Activated naive CD4-positive, alpha-beta T cell treated with anti-CD3 and anti-CD28 coated beads for 36 hours (primary cell): ENCODE measurements at regions of chr1 and their contacts with region 1.

Region 1: GRCh38 chr1:192550922-192551534 is 24.5 kb upstream of the RGS1 start:
- DNase-seq: peak; percentile 34
- H3K4me3 Mint-ChIP-seq: no peak overlapping the region
- H3K27ac Mint-ChIP-seq: peak overlapping the region; percentile 53
- H3K4me1 Mint-ChIP-seq: peaks cover 29% of the 10 kb centered on the region
- H3K27me3 Mint-ChIP-seq: no peaks in the 10 kb centered on the region

Region 2: GRCh38 chr1:192263436-192263835 is 287.6 kb before region 1 on chr1:
- CTCF ChIA-PET with region 1: no interaction called
- intact Hi-C with region 1: no loop called
- DNase-seq: no peak
- H3K4me3 Mint-ChIP-seq: no peak overlapping the region
- H3K27ac Mint-ChIP-seq: no peak overlapping the region
- H3K4me1 Mint-ChIP-seq: no peaks in the 10 kb centered on the region
- H3K27me3 Mint-ChIP-seq: no peaks in the 10 kb centered on the region

Region 3: DNA sequence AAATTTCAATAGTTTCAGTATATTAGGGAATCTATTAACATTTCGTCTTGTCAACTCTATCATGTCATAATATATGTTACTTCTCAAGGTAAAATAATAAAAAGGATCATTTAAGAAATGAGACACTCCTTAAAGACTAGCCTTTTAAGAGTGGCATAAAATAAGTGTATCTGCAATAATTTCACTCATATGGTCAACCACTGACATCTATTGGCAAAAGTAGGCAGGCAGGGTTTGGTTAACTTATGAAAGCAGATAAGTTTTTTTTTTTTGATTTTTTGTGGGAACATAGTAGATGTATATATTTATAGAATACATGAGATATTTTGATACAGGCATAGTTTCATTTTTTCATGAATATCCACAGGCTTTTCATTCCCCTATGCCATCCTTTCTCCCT is 239.7 kb before region 1 on chr1:
- CTCF ChIA-PET with region 1: no interaction called
- intact Hi-C with region 1: no loop called
- DNase-seq: no peak
- H3K4me3 Mint-ChIP-seq: no peak overlapping the region
- H3K27ac Mint-ChIP-seq: no peak overlapping the region
- H3K4me1 Mint-ChIP-seq: no peaks in the 10 kb centered on the region
- H3K27me3 Mint-ChIP-seq: no peaks in the 10 kb centered on the region

Region 4: GRCh38 chr1:192566657-192567056 is 15.6 kb after region 1 on chr1:
- CTCF ChIA-PET with region 1: interaction called, 3 read pairs
- intact Hi-C with region 1: loop called (anchors 1 kb)
- DNase-seq: no peak
- H3K4me3 Mint-ChIP-seq: no peak overlapping the region
- H3K27ac Mint-ChIP-seq: no peak overlapping the region
- H3K4me1 Mint-ChIP-seq: peaks cover 40% of the 10 kb centered on the region
- H3K27me3 Mint-ChIP-seq: no peaks in the 10 kb centered on the region